ENCODE measurements at regions of chr11 and their contacts with region 1.

Region 1: GRCh38 chr11:94623120-94623735 is 56.1 kb downstream of the PIWIL4 start:
- DNase-seq: peak in 4 of 5 donors; percentile 40 to 46 (median 44)
- ATAC-seq: peak; percentile 80 to 98 (median 95)
- H3K4me3 ChIP-seq: no peak overlapping the region
- H3K27ac ChIP-seq: no peak overlapping the region
- H3K4me1 ChIP-seq: peaks cover 0 to 5% (median 0%) of the 10 kb centered on the region in 12 donors
- H3K27me3 ChIP-seq: no peaks in the 10 kb centered on the region
- CTCF ChIP-seq: peak; percentile 56 to 94 (median 84)
- POLR2A ChIP-seq: no peak

Region 2: GRCh38 chr11:94602430-94603372 is 20.5 kb before region 1 on chr11:
- intact Hi-C with region 1: no loop called
- DNase-seq: peak in 4 of 5 donors; percentile 57 to 69 (median 58)
- ATAC-seq: peak in 3 of 4 donors; percentile 33 to 93 (median 51)
- H3K4me3 ChIP-seq: no peak overlapping the region
- H3K27ac ChIP-seq: peak overlapping the region in 1 of 12 donors; percentile 72
- H3K4me1 ChIP-seq: peaks cover 0 to 15% (median 0%) of the 10 kb centered on the region in 12 donors
- H3K27me3 ChIP-seq: no peaks in the 10 kb centered on the region
- CTCF ChIP-seq: peak in 6 of 12 donors; percentile 30 to 69 (median 56)
- POLR2A ChIP-seq: no peak

Region 3: GRCh38 chr11:94705896-94706615 is 82.8 kb after region 1 on chr11:
- intact Hi-C with region 1: loop called in 1 of 10 experiments (anchors 5 kb)
- DNase-seq: peak in 4 of 5 donors; percentile 25 to 55 (median 44)
- ATAC-seq: peak; percentile 72 to 91 (median 89)
- H3K4me3 ChIP-seq: peak overlapping the region in 11 of 12 donors; percentile 21 to 54 (median 47)
- H3K27ac ChIP-seq: peak overlapping the region; percentile 45 to 90 (median 78)
- H3K4me1 ChIP-seq: peaks cover 0 to 6% (median 0%) of the 10 kb centered on the region in 12 donors
- H3K27me3 ChIP-seq: no peaks in the 10 kb centered on the region
- CTCF ChIP-seq: no peak
- POLR2A ChIP-seq: no peak

Region 4: DNA sequence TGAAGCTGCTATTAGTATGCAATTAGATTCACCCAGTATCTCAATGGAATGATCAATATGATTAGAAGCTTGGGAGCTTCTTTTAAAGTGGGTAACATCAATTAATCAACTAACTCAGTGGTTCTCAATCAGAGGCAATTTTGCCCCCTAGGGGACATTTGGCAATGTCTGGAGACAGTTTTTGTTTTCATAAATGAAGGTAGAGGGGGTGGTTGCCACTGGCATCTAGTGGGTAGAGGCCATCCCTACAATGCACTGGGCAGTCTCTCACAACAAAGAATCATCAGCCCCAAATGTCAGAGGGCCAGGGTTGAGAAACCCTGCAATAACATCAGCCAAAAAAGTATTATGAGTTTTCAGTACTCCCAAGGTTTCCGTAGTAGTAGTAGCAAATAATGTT is 139.0 kb after region 1 on chr11:
- intact Hi-C with region 1: loop called (anchors 1 to 10 kb)
- DNase-seq: no peak
- ATAC-seq: peak in 1 of 4 donors; percentile 49
- H3K4me3 ChIP-seq: no peak overlapping the region
- H3K27ac ChIP-seq: peak overlapping the region in 1 of 12 donors; percentile 13
- H3K4me1 ChIP-seq: peaks cover 0 to 4% (median 0%) of the 10 kb centered on the region in 12 donors
- H3K27me3 ChIP-seq: no peaks in the 10 kb centered on the region
- CTCF ChIP-seq: peak in 11 of 12 donors; percentile 26 to 60 (median 42)
- POLR2A ChIP-seq: no peak

Region 5: GRCh38 chr11:94876645-94877442 is 253.6 kb after region 1 on chr11:
- intact Hi-C with region 1: loop called in 1 of 10 experiments (anchors 5 kb)
- DNase-seq: peak; percentile 78 to 86 (median 83)
- ATAC-seq: peak; percentile 75 to 98 (median 92)
- H3K4me3 ChIP-seq: no peak overlapping the region
- H3K27ac ChIP-seq: peak overlapping the region; percentile 17 to 80 (median 66)
- H3K4me1 ChIP-seq: peaks cover 0 to 23% (median 15%) of the 10 kb centered on the region in 12 donors
- H3K27me3 ChIP-seq: no peaks in the 10 kb centered on the region
- CTCF ChIP-seq: peak in 10 of 12 donors; percentile 15 to 58 (median 33)
- POLR2A ChIP-seq: no peak

Region 6: GRCh38 chr11:94973099-94973968 is 350.1 kb after region 1 on chr11 and contains the starts of genes CWC15 and KDM4D:
- intact Hi-C with region 1: loop called (anchors 2 to 10 kb)
- DNase-seq: peak; percentile 96
- ATAC-seq: peak; percentile 99 to 100 (median 100)
- H3K4me3 ChIP-seq: peak within 1 kb of the TSS; percentile 71 to 93 (median 87)
- H3K27ac ChIP-seq: peak within 1 kb of the TSS in 11 of 12 donors; percentile 57 to 89 (median 80)
- H3K4me1 ChIP-seq: peaks cover 4 to 19% (median 12%) of the 10 kb centered on the region in 12 donors
- H3K27me3 ChIP-seq: no peaks in the 10 kb centered on the region
- CTCF ChIP-seq: peak in 1 of 12 donors; percentile 15
- POLR2A ChIP-seq: no peak
- total RNA-seq, gene CWC15: 54.4 to 81.8 (median 62.6) TPM
- total RNA-seq, gene KDM4D: 0.65 to 1.3 (median 0.95) TPM in 8 of 9 donors, not detected in the other

Region 7: DNA sequence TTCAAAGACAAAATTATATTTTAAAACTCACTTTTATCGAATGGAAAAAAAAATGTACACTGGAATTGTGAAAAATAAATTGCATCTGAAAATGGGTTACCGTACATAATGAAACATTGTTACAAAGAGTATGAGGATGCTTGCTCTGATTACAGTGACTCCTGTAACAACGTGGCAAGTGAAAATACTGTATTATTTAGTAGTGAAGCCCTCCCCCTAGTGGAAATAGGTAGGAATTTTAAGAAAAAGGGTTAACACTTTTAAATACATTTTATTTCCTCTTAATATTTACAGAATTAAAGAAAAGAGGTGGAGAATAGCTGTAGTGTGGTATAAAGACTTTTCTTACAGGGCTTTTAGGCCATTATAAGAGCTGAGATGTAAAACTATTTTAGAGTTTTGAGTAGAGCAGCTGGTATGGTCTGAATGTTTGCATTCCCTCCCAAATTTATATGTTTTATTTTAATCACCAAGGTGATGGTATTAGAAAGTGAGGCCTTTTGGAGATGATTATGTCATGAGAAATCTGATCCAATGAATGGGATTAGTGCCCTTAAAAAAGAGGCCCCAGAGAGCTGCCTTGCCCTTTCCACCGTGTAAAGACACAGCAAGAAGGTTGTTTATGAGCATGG is 1141.2 kb after region 1 on chr11:
- intact Hi-C with region 1: loop called in 2 of 10 experiments (anchors 10 kb)
- DNase-seq: no peak
- ATAC-seq: peak in 3 of 4 donors; percentile 61 to 69 (median 62)
- H3K4me3 ChIP-seq: no peak overlapping the region
- H3K27ac ChIP-seq: no peak overlapping the region
- H3K4me1 ChIP-seq: peaks cover 0 to 16% (median 0%) of the 10 kb centered on the region in 12 donors
- H3K27me3 ChIP-seq: no peaks in the 10 kb centered on the region
- CTCF ChIP-seq: peak; percentile 56 to 85 (median 71)
- POLR2A ChIP-seq: no peak